Posterior vena cava (tissue), 2 donors: ENCODE measurements at regions of chr1 and their contacts with region 1.

Region 1: GRCh38 chr1:94061513-94062443 is 59.2 kb downstream of the ABCA4 start:
- DNase-seq: no peak

Region 2: GRCh38 chr1:94237291-94238226 is 175.8 kb after region 1 on chr1 and contains the start of gene ARHGAP29:
- intact Hi-C with region 1: loop called (anchors 5 to 10 kb)
- DNase-seq: peak; percentile 91
- total RNA-seq, gene ARHGAP29: 39.3 to 51.3 TPM